ENCODE measurements at regions of chr1 and their contacts with region 1.

Region 1: GRCh38 chr1:179706339-179706941 is 36.7 kb upstream of the FAM163A start:
- DNase-seq: peak; percentile 63
- ATAC-seq: no peak
- H3K4me3 Mint-ChIP-seq: no peak overlapping the region
- H3K27ac Mint-ChIP-seq: no peak overlapping the region
- H3K4me1 Mint-ChIP-seq: no peaks in the 10 kb centered on the region
- H3K27me3 Mint-ChIP-seq: peaks cover 6% of the 10 kb centered on the region

Region 2: DNA sequence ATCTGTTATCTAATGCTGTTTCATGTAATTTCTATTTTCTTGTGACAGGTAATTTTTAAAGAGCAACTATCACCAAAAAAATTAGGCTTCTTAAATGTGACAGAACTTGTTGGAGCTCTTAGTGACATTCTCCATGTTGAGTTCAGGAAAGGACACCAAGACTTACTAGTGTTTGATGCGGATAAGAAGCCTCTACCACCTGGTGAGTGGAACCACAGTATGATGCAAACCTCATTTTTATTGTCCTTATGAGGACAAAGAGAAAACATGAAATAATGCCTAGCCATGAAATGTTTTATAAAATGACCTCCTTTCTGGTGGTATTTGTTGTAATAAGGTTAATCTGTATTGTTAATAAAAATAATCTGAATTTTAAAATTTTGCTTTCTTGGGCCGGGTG is 75.7 kb before region 1 on chr1:
- CTCF ChIA-PET with region 1: no interaction called
- DNase-seq: no peak
- ATAC-seq: no peak
- H3K4me3 Mint-ChIP-seq: no peak overlapping the region
- H3K27ac Mint-ChIP-seq: no peak overlapping the region
- H3K4me1 Mint-ChIP-seq: no peaks in the 10 kb centered on the region
- H3K27me3 Mint-ChIP-seq: no peaks in the 10 kb centered on the region

Region 3: GRCh38 chr1:179742717-179743678 is 36.6 kb after region 1 on chr1 and contains the start of gene FAM163A:
- CTCF ChIA-PET with region 1: no interaction called
- DNase-seq: no peak
- ATAC-seq: no peak
- H3K4me3 Mint-ChIP-seq: no peak within 1 kb of the TSS
- H3K27ac Mint-ChIP-seq: no peak within 1 kb of the TSS
- H3K4me1 Mint-ChIP-seq: peaks cover 6% of the 10 kb centered on the region
- H3K27me3 Mint-ChIP-seq: peaks cover 80% of the 10 kb centered on the region
- total RNA-seq, gene FAM163A: not detected

Region 4: DNA sequence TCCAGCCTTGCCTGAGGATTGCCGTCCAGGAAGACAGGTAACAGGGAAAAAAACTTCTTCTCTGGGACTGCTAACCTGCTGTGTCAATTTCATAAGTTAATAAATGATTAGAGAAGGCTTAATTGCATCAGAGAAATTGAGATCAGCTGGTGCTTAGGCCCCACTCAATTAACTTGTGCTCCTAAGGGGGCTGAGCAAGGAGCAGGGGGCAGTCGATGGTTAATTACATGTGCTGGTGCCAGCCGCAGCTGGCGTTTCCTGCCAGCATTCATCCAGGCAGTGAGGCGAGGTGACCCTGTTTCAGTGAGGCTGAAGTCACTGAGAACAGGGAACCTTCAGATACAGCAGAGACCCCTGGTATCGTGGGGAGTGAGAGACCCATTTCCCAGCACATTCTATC is 96.7 kb after region 1 on chr1:
- CTCF ChIA-PET with region 1: interaction called, 222 read pairs
- DNase-seq: no peak
- ATAC-seq: no peak
- H3K4me3 Mint-ChIP-seq: no peak overlapping the region
- H3K27ac Mint-ChIP-seq: no peak overlapping the region
- H3K4me1 Mint-ChIP-seq: no peaks in the 10 kb centered on the region
- H3K27me3 Mint-ChIP-seq: peaks cover 2% of the 10 kb centered on the region

Measured in activated CD8-positive, alpha-beta memory T cell treated with anti-CD3 and anti-CD28 coated beads, Interleukin-2, amount 10 ng/mL, durations not matched to agents 7 days and 5 days (primary cell).